ENCODE measurements at regions of chr6 and their contacts with region 1.

Region 1: GRCh38 chr6:159979136-159979874 is 10.4 kb downstream of the IGF2R start:
- DNase-seq: peak in 1 of 9 donors; percentile 51
- ATAC-seq: peak; percentile 64
- H3K4me3 ChIP-seq: no peak overlapping the region
- H3K4me3 Mint-ChIP-seq: peak overlapping the region; percentile 8 to 82 (median 39)
- H3K27ac ChIP-seq: no peak overlapping the region
- H3K27ac Mint-ChIP-seq: peak overlapping the region; percentile 60 to 96 (median 86)
- H3K4me1 ChIP-seq: peaks cover 54 to 79% of the 10 kb centered on the region in 2 donors
- H3K4me1 Mint-ChIP-seq: peaks cover 78 to 99% (median 96%) of the 10 kb centered on the region in 7 donors
- H3K27me3 ChIP-seq: no peaks in the 10 kb centered on the region
- H3K27me3 Mint-ChIP-seq: no peaks in the 10 kb centered on the region

Region 2: GRCh38 chr6:159996626-159997497 is 17.6 kb after region 1 on chr6:
- CTCF ChIA-PET with region 1: no interaction called
- POLR2A ChIA-PET with region 1: interaction called, 3 read pairs
- intact Hi-C with region 1: loop called in 1 of 2 experiments (anchors 2 kb)
- DNase-seq: no peak
- ATAC-seq: peak; percentile 24
- H3K4me3 ChIP-seq: no peak overlapping the region
- H3K4me3 Mint-ChIP-seq: no peak overlapping the region
- H3K27ac ChIP-seq: no peak overlapping the region
- H3K27ac Mint-ChIP-seq: no peak overlapping the region
- H3K4me1 ChIP-seq: peaks cover 6 to 19% of the 10 kb centered on the region in 2 donors
- H3K4me1 Mint-ChIP-seq: peaks cover 53 to 76% (median 71%) of the 10 kb centered on the region in 7 donors
- H3K27me3 ChIP-seq: no peaks in the 10 kb centered on the region
- H3K27me3 Mint-ChIP-seq: no peaks in the 10 kb centered on the region

Region 3: DNA sequence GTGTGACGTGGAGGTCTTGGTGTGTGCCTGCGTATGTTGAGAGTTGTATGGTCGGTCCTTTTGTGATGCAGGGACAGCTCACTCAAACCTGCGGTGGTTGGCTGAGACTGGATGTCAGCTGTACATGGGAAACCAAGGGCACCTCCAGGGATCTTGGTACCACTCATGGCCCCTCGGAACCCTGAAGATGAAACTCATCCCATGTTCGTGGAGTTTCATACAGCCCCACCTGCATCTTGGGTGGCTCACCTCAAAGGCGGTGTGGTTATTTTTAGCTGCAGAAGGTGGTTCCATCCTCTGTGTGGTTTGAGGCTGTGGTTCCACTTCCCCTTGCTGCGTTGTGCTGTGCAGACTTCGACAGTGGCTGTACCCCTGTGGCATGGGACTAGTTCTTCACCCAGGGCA is 89.7 kb after region 1 on chr6:
- CTCF ChIA-PET with region 1: no interaction called
- POLR2A ChIA-PET with region 1: no interaction called
- intact Hi-C with region 1: loop called in 1 of 2 experiments (anchors 5 kb)
- DNase-seq: peak in 5 of 9 donors; percentile 9 to 36 (median 21)
- ATAC-seq: peak; percentile 63
- H3K4me3 ChIP-seq: peak overlapping the region; percentile 13
- H3K4me3 Mint-ChIP-seq: peak overlapping the region; percentile 18 to 69 (median 56)
- H3K27ac ChIP-seq: no peak overlapping the region
- H3K27ac Mint-ChIP-seq: peak overlapping the region in 3 of 9 donors; percentile 11 to 31 (median 17)
- H3K4me1 ChIP-seq: peaks cover 15 to 20% of the 10 kb centered on the region in 2 donors
- H3K4me1 Mint-ChIP-seq: peaks cover 24 to 63% (median 32%) of the 10 kb centered on the region in 7 donors
- H3K27me3 ChIP-seq: no peaks in the 10 kb centered on the region
- H3K27me3 Mint-ChIP-seq: no peaks in the 10 kb centered on the region

Measured in naive thymus-derived CD4-positive, alpha-beta T cell (primary cell).